Tibial artery (tissue), 4 donors: ENCODE measurements at regions of chr15 and their contacts with region 1.

Region 1: GRCh38 chr15:90482124-90483011 is 47.4 kb upstream of the CRTC3 start:
- DNase-seq: peak in 1 of 2 donors; percentile 35
- H3K4me3 ChIP-seq: no peak overlapping the region
- H3K27ac ChIP-seq: peak overlapping the region; percentile 36 to 63
- H3K4me1 ChIP-seq: peaks cover 0 to 29% (median 7%) of the 10 kb centered on the region in 4 donors
- H3K27me3 ChIP-seq: no peaks in the 10 kb centered on the region
- CTCF ChIP-seq: peak; percentile 64 to 80

Region 2: DNA sequence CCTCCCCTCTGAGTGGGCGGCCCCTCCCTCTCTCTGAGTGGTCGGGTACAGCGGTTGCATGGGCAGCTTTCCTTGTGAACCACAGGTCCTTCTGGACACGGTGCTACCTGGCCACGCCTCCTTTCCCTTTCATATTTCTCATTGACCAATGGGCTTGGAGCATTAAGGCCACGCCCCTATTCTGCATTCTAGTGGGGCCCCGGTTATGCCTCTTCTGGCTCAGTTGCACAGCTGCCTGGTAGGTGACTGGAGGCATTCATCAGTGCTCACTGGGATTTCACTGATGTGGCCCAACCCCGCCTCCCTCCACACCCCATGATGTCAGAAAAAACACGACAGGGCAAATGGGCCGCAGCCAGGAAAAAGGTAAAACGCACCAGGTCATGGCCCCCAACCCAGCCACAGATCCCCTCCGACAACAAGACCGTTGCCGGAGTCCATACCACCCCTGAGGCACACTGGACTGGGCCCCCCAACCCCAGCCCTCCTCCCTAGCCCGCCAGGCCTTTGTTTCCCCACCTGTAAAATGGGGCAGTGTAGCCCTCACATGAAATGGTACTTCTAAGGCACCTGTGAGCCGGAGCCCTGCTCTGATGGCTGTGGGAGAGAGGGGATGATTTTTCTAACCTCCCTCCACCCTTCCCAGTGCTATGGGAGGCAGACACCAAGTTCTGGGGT is 190.6 kb before region 1 on chr15:
- intact Hi-C with region 1: loop called (anchors 10 kb)
- DNase-seq: no peak
- H3K4me3 ChIP-seq: no peak overlapping the region
- H3K27ac ChIP-seq: no peak overlapping the region
- H3K4me1 ChIP-seq: peaks cover 0 to 38% (median 12%) of the 10 kb centered on the region in 4 donors
- H3K27me3 ChIP-seq: no peaks in the 10 kb centered on the region
- CTCF ChIP-seq: no peak

Region 3: GRCh38 chr15:90322538-90322937 is 159.8 kb before region 1 on chr15:
- intact Hi-C with region 1: loop called (anchors 2 kb)
- DNase-seq: no peak
- H3K4me3 ChIP-seq: no peak overlapping the region
- H3K27ac ChIP-seq: peak overlapping the region in 1 of 2 donors; percentile 49
- H3K4me1 ChIP-seq: peaks cover 0 to 32% (median 7%) of the 10 kb centered on the region in 4 donors
- H3K27me3 ChIP-seq: no peaks in the 10 kb centered on the region
- CTCF ChIP-seq: no peak

Region 4: DNA sequence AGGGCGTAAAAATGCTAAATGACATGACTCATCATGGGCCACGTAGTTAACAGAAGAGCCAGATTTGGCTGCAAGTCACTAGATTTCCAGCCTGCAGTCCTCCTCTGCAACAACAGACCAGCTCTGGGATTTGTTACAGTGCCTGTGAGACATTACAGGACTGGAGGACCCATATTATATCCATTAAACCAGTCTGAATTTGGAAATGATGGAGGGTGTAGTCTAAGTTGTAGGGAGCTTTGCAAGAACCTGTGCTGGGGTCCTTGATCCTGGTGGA is 119.5 kb before region 1 on chr15:
- intact Hi-C with region 1: loop called (anchors 5 kb)
- DNase-seq: peak in 1 of 2 donors; percentile 42
- H3K4me3 ChIP-seq: no peak overlapping the region
- H3K27ac ChIP-seq: peak overlapping the region; percentile 70 to 72
- H3K4me1 ChIP-seq: peaks cover 0 to 42% (median 30%) of the 10 kb centered on the region in 4 donors
- H3K27me3 ChIP-seq: no peaks in the 10 kb centered on the region
- CTCF ChIP-seq: no peak